K562 (cell line): ENCODE measurements at regions of chrX and their contacts with region 1.

Region 1: DNA sequence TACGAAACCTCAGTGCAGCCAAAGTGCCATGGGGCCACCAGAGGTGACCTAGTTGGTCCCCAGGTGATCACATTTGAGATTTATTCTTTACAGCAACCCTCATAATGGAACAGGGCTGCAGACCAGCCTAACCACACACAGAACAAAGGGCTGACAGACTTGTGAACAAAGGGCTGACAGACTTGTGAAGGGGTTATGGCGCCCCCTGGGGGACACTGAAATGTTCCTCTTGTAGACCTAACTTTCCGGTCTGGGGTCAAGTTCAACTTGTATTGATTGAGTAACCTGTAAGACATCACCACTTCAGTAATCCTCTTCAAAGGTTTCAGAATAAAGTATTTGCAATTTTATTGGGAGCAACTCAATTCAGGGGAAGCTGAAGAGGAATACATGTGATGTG is 175.9 kb upstream of the RPS6KA3 start:
- DNase-seq: peak; percentile 38 to 74 (median 52)
- ATAC-seq: peak; percentile 88
- H3K4me3 ChIP-seq: no peak overlapping the region
- H3K27ac ChIP-seq: no peak overlapping the region
- H3K4me1 ChIP-seq: no peaks in the 10 kb centered on the region
- H3K27me3 ChIP-seq: no peaks in the 10 kb centered on the region
- CTCF ChIP-seq: peak; percentile 56 to 75 (median 71)
- EP300 ChIP-seq: no peak
- POLR2A ChIP-seq: no peak
- RAD21 ChIP-seq: peak; percentile 69 to 83

Region 2: GRCh38 chrX:19904778-19905367 is 537.7 kb before region 1 on chrX:
- CTCF ChIA-PET with region 1: interaction called, 4 read pairs
- POLR2A ChIA-PET with region 1: no interaction called
- in situ Hi-C with region 1: no loop called
- intact Hi-C with region 1: loop called (anchors 2 kb)
- DNase-seq: peak; percentile 15 to 47 (median 33)
- ATAC-seq: peak; percentile 81
- H3K4me3 ChIP-seq: no peak overlapping the region
- H3K27ac ChIP-seq: no peak overlapping the region
- H3K4me1 ChIP-seq: no peaks in the 10 kb centered on the region; a peak in 1 of 5 replicates
- H3K27me3 ChIP-seq: no peaks in the 10 kb centered on the region
- CTCF ChIP-seq: peak; percentile 66 to 78 (median 68)
- EP300 ChIP-seq: no peak
- POLR2A ChIP-seq: no peak
- RAD21 ChIP-seq: peak; percentile 63 to 76

Region 3: GRCh38 chrX:20060961-20061748 is 381.4 kb before region 1 on chrX:
- CTCF ChIA-PET with region 1: no interaction called
- POLR2A ChIA-PET with region 1: no interaction called
- in situ Hi-C with region 1: no loop called
- intact Hi-C with region 1: loop called (anchors 5 kb)
- DNase-seq: no peak
- ATAC-seq: no peak
- H3K4me3 ChIP-seq: no peak overlapping the region
- H3K27ac ChIP-seq: no peak overlapping the region
- H3K4me1 ChIP-seq: no peaks in the 10 kb centered on the region
- H3K27me3 ChIP-seq: peaks cover 0 to 23% of the 10 kb centered on the region in 2 experiments; a peak in 3 of 5 replicates
- CTCF ChIP-seq: peak in 1 of 3 experiments; percentile 2; a peak in 1 of 6 replicates
- EP300 ChIP-seq: no peak
- POLR2A ChIP-seq: no peak
- RAD21 ChIP-seq: no peak

Region 4: GRCh38 chrX:20141281-20142220 is 301.0 kb before region 1 on chrX and contains the start of gene EIF1AX:
- CTCF ChIA-PET with region 1: no interaction called
- POLR2A ChIA-PET with region 1: no interaction called
- in situ Hi-C with region 1: no loop called
- intact Hi-C with region 1: loop called (anchors 10 kb)
- DNase-seq: peak; percentile 83 to 97 (median 86)
- ATAC-seq: peak; percentile 97
- H3K4me3 ChIP-seq: peak within 1 kb of the TSS; percentile 97
- H3K27ac ChIP-seq: peak within 1 kb of the TSS; percentile 89
- H3K4me1 ChIP-seq: peaks cover 4 to 19% of the 10 kb centered on the region in 2 experiments; a peak in 4 of 5 replicates
- H3K27me3 ChIP-seq: no peaks in the 10 kb centered on the region
- CTCF ChIP-seq: no peak
- EP300 ChIP-seq: no peak
- POLR2A ChIP-seq: peak; percentile 90
- RAD21 ChIP-seq: no peak
- polyA plus RNA-seq, gene EIF1AX: 54.2 to 56.4 TPM

Region 5: DNA sequence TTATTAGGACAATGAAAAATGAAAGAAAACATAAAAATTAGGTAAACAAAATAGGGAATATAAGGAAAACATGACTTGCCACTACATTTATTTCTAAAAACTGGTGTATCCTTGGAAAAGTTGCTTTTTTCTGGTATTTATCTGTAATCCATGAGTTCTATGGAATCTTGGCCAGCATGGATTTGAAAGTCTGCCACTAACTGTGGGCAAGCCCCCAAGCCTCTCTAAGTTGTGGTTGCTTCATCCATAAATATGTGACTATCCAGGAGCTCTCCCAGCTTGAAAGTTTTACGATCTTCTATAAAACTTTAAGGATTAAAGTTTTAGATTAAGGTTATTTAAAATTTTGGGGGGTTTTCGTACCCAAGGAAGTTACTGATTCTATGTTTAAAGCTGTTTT is 197.7 kb before region 1 on chrX:
- CTCF ChIA-PET with region 1: no interaction called
- POLR2A ChIA-PET with region 1: no interaction called
- in situ Hi-C with region 1: loop called (anchors 10 kb)
- intact Hi-C with region 1: no loop called
- DNase-seq: no peak
- ATAC-seq: no peak
- H3K4me3 ChIP-seq: no peak overlapping the region
- H3K27ac ChIP-seq: no peak overlapping the region
- H3K4me1 ChIP-seq: no peaks in the 10 kb centered on the region
- H3K27me3 ChIP-seq: no peaks in the 10 kb centered on the region
- CTCF ChIP-seq: no peak
- EP300 ChIP-seq: no peak
- POLR2A ChIP-seq: no peak
- RAD21 ChIP-seq: no peak

Region 6: GRCh38 chrX:20252381-20253231 is 190.0 kb before region 1 on chrX:
- CTCF ChIA-PET with region 1: interaction called, 5 read pairs
- POLR2A ChIA-PET with region 1: no interaction called
- in situ Hi-C with region 1: loop called (anchors 10 kb)
- intact Hi-C with region 1: loop called (anchors 1 kb)
- DNase-seq: peak; percentile 39 to 65 (median 42)
- ATAC-seq: peak; percentile 91
- H3K4me3 ChIP-seq: no peak overlapping the region
- H3K27ac ChIP-seq: no peak overlapping the region
- H3K4me1 ChIP-seq: peaks cover 0 to 6% of the 10 kb centered on the region in 2 experiments; a peak in 2 of 5 replicates
- H3K27me3 ChIP-seq: no peaks in the 10 kb centered on the region
- CTCF ChIP-seq: peak; percentile 61 to 67 (median 66)
- EP300 ChIP-seq: no peak
- POLR2A ChIP-seq: 0 out of 2 replicates have a peak, but pooled peaks have one; percentile 30
- RAD21 ChIP-seq: peak in 1 of 2 experiments; percentile 51; a peak in 2 of 4 replicates

Region 7: DNA sequence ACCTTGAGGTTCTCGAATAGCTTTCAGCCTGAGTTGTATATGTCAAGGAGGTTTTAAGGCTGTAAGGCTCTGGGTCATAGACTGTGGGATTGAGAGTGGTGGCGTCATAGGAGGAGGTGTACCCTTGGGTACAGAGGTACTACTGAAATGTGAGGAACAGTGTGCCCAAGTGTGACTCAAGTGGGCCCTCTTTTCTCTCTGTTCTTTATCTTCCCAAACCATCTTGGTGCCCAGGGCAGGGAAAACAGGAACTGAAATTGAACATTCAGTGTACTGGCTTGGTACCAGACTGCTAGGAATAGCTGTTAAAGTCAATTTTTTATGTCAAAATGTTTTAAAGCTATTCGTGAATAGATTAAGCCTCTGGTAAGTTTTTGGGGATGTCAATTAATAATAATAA is 39.6 kb before region 1 on chrX:
- CTCF ChIA-PET with region 1: no interaction called
- POLR2A ChIA-PET with region 1: no interaction called
- in situ Hi-C with region 1: no loop called
- intact Hi-C with region 1: no loop called
- DNase-seq: no peak
- ATAC-seq: no peak
- H3K4me3 ChIP-seq: no peak overlapping the region
- H3K27ac ChIP-seq: no peak overlapping the region
- H3K4me1 ChIP-seq: no peaks in the 10 kb centered on the region
- H3K27me3 ChIP-seq: 0 out of 5 replicates have a peak, but pooled peaks cover 0 to 6% of the 10 kb centered on the region in 2 experiments
- CTCF ChIP-seq: no peak
- EP300 ChIP-seq: no peak
- POLR2A ChIP-seq: no peak
- RAD21 ChIP-seq: no peak